ENCODE measurements at regions of chr19 and their contacts with region 1.

Region 1: GRCh38 chr19:8158411-8159074 is 9.2 kb upstream of the FBN3 start:
- DNase-seq: peak; percentile 43
- H3K4me3 Mint-ChIP-seq: no peak overlapping the region
- H3K27ac Mint-ChIP-seq: no peak overlapping the region
- H3K4me1 Mint-ChIP-seq: peaks cover 15% of the 10 kb centered on the region
- H3K27me3 Mint-ChIP-seq: peaks cover 19% of the 10 kb centered on the region

Region 2: GRCh38 chr19:7989071-7989575 is 169.4 kb before region 1 on chr19:
- intact Hi-C with region 1: no loop called
- DNase-seq: no peak
- H3K4me3 Mint-ChIP-seq: no peak overlapping the region
- H3K27ac Mint-ChIP-seq: no peak overlapping the region
- H3K4me1 Mint-ChIP-seq: peaks cover 19% of the 10 kb centered on the region
- H3K27me3 Mint-ChIP-seq: no peaks in the 10 kb centered on the region

Region 3: GRCh38 chr19:8194528-8195267 is 36.2 kb after region 1 on chr19:
- intact Hi-C with region 1: loop called (anchors 2 kb)
- DNase-seq: peak; percentile 36
- H3K4me3 Mint-ChIP-seq: peak overlapping the region; percentile 72
- H3K27ac Mint-ChIP-seq: peak overlapping the region; percentile 98
- H3K4me1 Mint-ChIP-seq: peaks cover 49% of the 10 kb centered on the region
- H3K27me3 Mint-ChIP-seq: no peaks in the 10 kb centered on the region

Region 4: GRCh38 chr19:8208922-8209461 is 50.4 kb after region 1 on chr19 and contains the start of gene CERS4:
- intact Hi-C with region 1: loop called (anchors 1 kb)
- DNase-seq: peak; percentile 64
- H3K4me3 Mint-ChIP-seq: peak within 1 kb of the TSS; percentile 88
- H3K27ac Mint-ChIP-seq: peak within 1 kb of the TSS; percentile 87
- H3K4me1 Mint-ChIP-seq: peaks cover 19% of the 10 kb centered on the region
- H3K27me3 Mint-ChIP-seq: peaks cover 5% of the 10 kb centered on the region
- total RNA-seq, gene CERS4: 26.4 and 29.7 TPM in 2 replicates

Region 5: DNA sequence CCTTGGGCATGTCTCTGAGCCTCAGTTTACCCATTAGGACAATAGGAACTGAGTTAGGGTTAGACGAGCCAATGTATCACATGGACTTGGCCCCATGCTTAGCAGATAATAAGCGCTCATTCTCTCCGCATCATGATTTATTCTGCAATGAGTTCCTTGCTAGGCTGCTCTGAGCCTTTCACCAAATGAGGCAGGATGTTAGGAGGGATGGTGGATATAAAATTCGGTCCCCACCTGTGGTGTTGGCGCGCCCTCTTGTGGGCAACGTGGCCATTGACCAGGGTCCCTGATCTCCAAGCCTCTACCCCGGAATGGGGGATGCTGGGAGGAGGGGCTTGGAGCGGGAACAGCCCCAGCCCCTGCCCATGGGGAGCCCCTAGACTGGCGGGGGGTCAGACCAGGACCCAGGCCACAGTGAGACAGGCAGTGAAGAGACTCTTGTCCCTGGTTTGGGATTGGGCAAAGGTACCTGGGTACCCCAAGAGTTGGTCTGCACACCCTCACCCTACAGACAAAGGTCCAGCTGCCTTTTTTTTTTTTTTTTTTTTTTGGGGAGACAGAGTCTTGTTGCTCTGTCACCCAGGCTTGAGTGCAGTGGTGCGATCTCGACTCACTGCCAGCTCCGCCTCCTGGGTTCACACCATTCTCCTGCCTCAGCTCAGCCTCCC is 94.5 kb after region 1 on chr19:
- intact Hi-C with region 1: loop called (anchors 1 kb)
- DNase-seq: peak; percentile 71
- H3K4me3 Mint-ChIP-seq: no peak overlapping the region
- H3K27ac Mint-ChIP-seq: no peak overlapping the region
- H3K4me1 Mint-ChIP-seq: no peaks in the 10 kb centered on the region
- H3K27me3 Mint-ChIP-seq: no peaks in the 10 kb centered on the region

Region 6: DNA sequence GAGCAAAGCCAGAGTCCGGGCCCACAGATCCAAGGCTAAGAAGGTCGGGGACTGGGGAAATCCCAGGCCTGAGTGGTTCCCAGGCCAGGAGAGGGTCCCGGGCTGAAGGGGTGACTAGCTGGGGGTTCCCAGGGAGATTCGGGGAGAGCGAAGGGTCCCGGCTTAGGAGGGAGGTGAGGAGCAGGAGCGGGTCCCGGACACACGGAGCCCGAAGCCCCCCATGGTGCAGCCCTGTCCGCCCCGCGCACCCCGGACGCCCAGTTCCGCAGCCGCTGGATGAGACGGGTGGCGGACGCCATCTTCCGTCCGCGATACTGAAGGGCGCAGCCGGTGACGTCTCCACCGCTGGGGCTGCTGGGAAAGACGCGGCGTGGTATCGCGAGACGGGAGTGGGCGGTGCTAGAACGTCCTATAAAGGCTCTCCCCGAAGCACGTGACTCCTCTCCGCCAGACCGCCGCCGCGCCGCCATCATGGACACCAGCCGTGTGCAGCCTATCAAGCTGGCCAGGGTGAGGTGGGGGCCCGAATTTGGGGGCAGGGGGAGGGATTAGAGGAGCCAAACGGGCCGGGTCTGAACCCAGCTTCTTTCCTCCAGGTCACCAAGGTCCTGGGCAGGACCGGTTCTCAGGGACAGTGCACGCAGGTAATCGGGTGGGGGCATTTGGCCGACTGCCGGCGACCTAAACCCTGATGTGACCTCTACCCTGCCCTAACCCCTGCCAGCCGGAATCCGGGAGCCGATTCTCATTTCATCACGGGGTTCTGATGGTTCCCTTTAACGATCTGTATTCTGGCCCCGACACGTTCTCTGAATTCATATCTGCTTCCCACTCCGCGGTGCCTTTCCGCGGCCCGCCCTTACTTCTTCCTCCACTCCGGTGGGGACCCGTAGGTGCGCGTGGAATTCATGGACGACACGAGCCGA is 162.8 kb after region 1 on chr19 and contains the starts of genes NDUFA7 and RPS28:
- intact Hi-C with region 1: loop called (anchors 1 kb)
- DNase-seq: peak; percentile 96
- H3K4me3 Mint-ChIP-seq: peak within 1 kb of the TSS; percentile 100
- H3K27ac Mint-ChIP-seq: peak within 1 kb of the TSS; percentile 99
- H3K4me1 Mint-ChIP-seq: peaks cover 31% of the 10 kb centered on the region
- H3K27me3 Mint-ChIP-seq: no peaks in the 10 kb centered on the region
- total RNA-seq, gene NDUFA7: 51.1 and 51.8 TPM in 2 replicates
- total RNA-seq, gene RPS28: 1,836 and 1,872 TPM in 2 replicates